H1 (cell line): ENCODE measurements at regions of chr1 and their contacts with region 1.

Region 1: DNA sequence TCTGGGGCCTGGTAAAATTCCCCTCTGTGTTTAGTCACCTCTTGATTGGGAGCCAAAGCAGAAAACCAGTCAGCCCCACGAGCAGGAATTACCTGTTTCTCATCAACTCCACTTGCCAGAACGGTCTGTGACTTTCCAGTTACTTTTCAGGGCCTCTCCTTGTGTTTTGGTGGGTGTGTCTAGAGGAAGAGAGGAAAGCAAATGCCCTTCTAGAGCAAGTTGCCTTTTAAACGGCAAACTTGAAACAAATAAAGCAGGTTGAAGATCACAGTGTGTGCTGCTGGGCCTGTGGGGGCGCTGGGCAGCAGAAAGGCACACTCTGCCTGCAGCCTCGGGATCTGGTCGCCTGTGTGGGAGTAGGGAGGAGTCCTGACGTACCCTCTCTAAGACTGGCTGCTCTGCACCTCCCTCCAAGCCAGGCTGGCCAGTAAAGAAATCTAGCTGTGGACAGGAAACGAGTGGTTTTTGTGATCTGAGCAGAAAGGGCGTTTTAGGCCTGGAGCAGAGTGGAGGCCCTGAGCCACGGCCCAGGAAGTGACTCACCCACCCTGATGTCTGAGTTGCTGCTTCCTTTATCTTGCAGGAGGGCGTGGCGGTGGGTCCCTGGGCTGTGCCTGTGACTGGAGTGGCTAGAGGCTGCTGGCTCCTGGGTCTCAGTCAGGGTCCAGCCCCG is 11.1 kb upstream of the S100A11 start:
- DNase-seq: peak; percentile 73 to 79
- H3K4me3 ChIP-seq: peak overlapping the region; percentile 3 to 44 (median 24); a peak in 5 of 8 replicates
- H3K27ac ChIP-seq: peak overlapping the region; percentile 67
- H3K4me1 ChIP-seq: peaks cover 14 to 19% (median 17%) of the 10 kb centered on the region in 4 experiments; a peak in 6 of 7 replicates
- H3K27me3 ChIP-seq: no peaks in the 10 kb centered on the region
- CTCF ChIP-seq: peak; percentile 52 to 80 (median 73); a peak in 3 of 4 replicates
- EP300 ChIP-seq: no peak
- POLR2A ChIP-seq: peak in 1 of 2 experiments; percentile 72; a peak in 2 of 3 replicates
- RAD21 ChIP-seq: peak in 1 of 2 experiments; percentile 17; a peak in 1 of 4 replicates

Region 2: GRCh38 chr1:151858030-151858691 is 189.7 kb before region 1 on chr1:
- CTCF ChIA-PET with region 1: no interaction called
- POLR2A ChIA-PET with region 1: no interaction called
- DNase-seq: peak in 1 of 2 experiments; percentile 19
- H3K4me3 ChIP-seq: no peak overlapping the region
- H3K27ac ChIP-seq: no peak overlapping the region
- H3K4me1 ChIP-seq: peaks cover 8 to 16% (median 12%) of the 10 kb centered on the region in 4 experiments
- H3K27me3 ChIP-seq: peaks cover 22 to 56% (median 48%) of the 10 kb centered on the region in 4 experiments
- CTCF ChIP-seq: no peak
- EP300 ChIP-seq: no peak
- POLR2A ChIP-seq: no peak
- RAD21 ChIP-seq: no peak

Region 3: DNA sequence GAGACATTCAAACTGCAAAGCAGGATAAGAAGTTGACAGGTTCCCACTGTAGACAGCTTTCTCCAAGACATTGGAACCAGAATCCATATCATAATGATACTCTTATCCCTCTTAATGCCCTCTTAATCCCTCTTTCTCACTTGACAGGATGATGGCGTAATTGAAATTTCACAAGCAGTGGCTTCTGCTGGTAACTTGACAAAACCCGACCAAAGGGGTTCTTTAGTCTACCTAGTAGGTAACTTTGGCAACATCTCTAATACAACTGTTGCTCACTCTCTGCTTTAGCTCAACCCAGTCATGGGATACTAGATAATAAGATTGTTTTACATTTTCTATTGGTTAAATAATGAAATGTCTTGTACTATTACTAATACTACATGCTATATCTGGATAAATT is 88.9 kb before region 1 on chr1:
- CTCF ChIA-PET with region 1: no interaction called
- POLR2A ChIA-PET with region 1: no interaction called
- DNase-seq: no peak
- H3K4me3 ChIP-seq: no peak overlapping the region
- H3K27ac ChIP-seq: no peak overlapping the region
- H3K4me1 ChIP-seq: no peaks in the 10 kb centered on the region
- H3K27me3 ChIP-seq: no peaks in the 10 kb centered on the region
- CTCF ChIP-seq: no peak
- EP300 ChIP-seq: no peak
- POLR2A ChIP-seq: no peak
- RAD21 ChIP-seq: no peak

Region 4: DNA sequence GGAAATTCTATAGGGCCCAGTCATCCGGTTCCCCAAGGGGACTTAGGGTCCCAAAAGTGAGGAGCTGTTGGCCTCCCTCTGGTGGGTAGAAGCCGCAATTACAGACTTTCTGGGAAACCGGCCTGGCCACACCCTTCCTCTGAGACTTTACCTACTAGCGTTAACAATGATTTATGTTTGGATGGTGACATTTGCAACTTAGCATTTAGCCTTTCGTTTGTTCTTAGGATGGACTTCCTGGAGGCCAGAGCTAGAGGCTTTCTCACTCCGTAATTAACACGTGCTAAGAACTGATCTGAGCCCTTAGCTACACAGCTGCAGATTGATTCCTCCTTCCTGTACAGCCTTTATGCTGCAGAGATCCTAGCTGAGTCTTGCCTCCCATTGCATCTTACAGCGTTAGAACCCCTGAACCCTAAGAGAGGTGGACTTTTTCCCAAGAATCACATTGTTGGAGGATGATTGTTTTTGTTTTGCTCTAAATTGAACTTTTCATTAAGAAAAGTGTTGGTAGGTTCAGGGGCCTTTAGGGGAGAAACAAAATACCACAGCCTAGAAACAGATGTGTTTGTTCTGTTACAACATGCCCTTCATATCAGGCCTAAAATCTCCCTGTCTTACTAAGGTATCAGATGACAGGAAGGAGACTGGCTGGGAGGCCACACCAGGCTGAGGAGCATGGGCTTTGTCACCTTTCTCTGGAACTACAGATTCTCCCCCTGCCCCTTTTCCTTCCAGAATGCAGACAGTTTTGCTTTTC is 13.0 kb before region 1 on chr1:
- CTCF ChIA-PET with region 1: interaction called, 12 read pairs
- POLR2A ChIA-PET with region 1: interaction called, 4 read pairs
- DNase-seq: peak in 1 of 2 experiments; percentile 87
- H3K4me3 ChIP-seq: peak overlapping the region in 2 of 4 experiments; percentile 74 to 76; a peak in 4 of 8 replicates
- H3K27ac ChIP-seq: no peak overlapping the region
- H3K4me1 ChIP-seq: peaks cover 4 to 12% (median 6%) of the 10 kb centered on the region in 4 experiments
- H3K27me3 ChIP-seq: no peaks in the 10 kb centered on the region; a peak in 2 of 7 replicates
- CTCF ChIP-seq: peak; percentile 56 to 79 (median 73)
- EP300 ChIP-seq: no peak
- POLR2A ChIP-seq: no peak
- RAD21 ChIP-seq: peak; percentile 42 to 56; a peak in 3 of 4 replicates

Region 5: DNA sequence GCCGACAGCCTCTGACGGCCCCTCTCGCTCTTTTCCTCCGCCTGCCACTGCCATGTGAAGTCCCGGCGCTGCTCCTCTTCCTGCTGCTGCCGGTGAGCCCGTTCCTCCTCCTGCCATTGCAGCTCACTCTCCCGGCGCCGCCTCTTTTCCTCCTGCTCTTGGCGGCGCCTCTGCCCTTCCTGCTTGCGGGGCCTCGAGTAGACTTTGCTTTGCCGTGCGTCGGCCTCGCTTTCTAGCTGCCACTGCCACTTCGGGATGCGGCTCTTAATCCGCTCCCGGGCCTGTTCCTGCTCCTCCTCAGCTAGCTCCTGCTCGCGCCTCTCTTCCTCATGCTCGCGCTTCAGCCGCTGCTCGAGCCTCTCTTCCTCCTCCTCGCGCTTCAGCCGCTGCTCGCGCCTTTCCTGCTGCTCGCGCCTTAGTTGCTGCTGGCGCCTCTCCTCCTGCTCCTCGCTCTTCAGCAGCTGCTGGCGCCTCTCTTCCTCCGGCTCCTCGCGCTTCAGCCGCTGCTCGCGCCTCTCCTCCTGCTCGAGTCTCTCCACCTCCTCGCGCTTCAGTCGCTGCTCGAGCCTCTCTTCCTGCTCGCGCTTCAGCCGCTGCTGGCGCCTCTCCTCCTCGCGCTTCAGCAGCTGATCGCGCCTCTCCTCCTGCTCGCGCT is 63.1 kb after region 1 on chr1:
- CTCF ChIA-PET with region 1: interaction called, 10 read pairs
- POLR2A ChIA-PET with region 1: no interaction called
- DNase-seq: peak in 1 of 2 experiments; percentile 67
- H3K4me3 ChIP-seq: peak overlapping the region; percentile 0 to 40 (median 18); a peak in 6 of 8 replicates
- H3K27ac ChIP-seq: no peak overlapping the region
- H3K4me1 ChIP-seq: peaks cover 0 to 11% (median 4%) of the 10 kb centered on the region in 4 experiments; a peak in 5 of 7 replicates
- H3K27me3 ChIP-seq: peaks cover 54 to 83% (median 79%) of the 10 kb centered on the region in 4 experiments
- CTCF ChIP-seq: no peak
- EP300 ChIP-seq: no peak
- POLR2A ChIP-seq: no peak
- RAD21 ChIP-seq: no peak

Region 6: DNA sequence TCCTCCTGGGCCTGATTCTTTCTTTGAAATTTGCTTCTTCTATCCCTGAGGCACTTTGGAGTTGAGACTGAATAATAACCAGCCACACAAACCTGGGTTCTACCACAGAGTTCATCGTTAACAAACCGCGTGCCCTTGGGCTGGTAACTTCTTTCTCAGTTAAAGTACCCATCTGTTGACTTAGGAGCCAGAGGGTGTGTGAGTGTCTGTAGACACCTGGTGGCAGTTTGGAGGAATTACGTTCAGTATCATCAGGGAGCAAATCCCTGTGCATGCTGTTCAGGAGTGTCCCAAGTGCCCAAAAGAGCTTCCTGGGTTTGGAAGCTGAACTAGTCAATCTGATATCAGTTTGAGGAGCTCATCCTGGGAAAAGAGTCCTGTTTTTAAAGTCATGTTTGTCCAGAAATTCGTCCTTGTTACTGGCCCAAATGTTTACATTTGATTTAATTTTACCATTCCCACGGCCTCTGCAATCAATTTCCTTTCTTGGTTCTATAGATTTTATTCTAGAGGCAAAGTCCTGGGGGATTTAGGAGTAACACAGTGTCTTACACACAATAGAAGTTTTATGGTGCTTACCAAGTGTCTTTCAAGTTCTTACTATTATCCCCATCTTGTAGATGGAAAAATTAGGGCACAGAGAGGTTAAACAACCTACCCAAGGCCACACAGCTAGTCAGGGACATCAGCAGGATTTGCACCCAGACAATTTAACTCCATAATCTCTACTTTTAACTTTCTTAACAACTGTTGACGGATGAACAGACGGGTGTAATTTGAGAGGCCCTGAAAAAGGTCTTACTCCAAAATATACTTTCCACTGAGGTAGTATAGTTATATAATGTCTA is 137.9 kb after region 1 on chr1:
- CTCF ChIA-PET with region 1: interaction called, 10 read pairs
- POLR2A ChIA-PET with region 1: no interaction called
- DNase-seq: peak in 1 of 2 experiments; percentile 42
- H3K4me3 ChIP-seq: no peak overlapping the region
- H3K27ac ChIP-seq: no peak overlapping the region
- H3K4me1 ChIP-seq: no peaks in the 10 kb centered on the region
- H3K27me3 ChIP-seq: 0 out of 7 replicates have a peak, but pooled peaks cover 0 to 2% (median 0%) of the 10 kb centered on the region in 4 experiments
- CTCF ChIP-seq: peak; percentile 46 to 77 (median 74)
- EP300 ChIP-seq: no peak
- POLR2A ChIP-seq: no peak
- RAD21 ChIP-seq: peak; percentile 75 to 83

Region 7: GRCh38 chr1:152440635-152441471 is 393.0 kb after region 1 on chr1:
- CTCF ChIA-PET with region 1: interaction called, 12 read pairs
- POLR2A ChIA-PET with region 1: no interaction called
- DNase-seq: peak in 1 of 2 experiments; percentile 58
- H3K4me3 ChIP-seq: no peak overlapping the region
- H3K27ac ChIP-seq: no peak overlapping the region
- H3K4me1 ChIP-seq: no peaks in the 10 kb centered on the region; a peak in 1 of 7 replicates
- H3K27me3 ChIP-seq: no peaks in the 10 kb centered on the region
- CTCF ChIP-seq: peak; percentile 60 to 67 (median 61)
- EP300 ChIP-seq: no peak
- POLR2A ChIP-seq: no peak
- RAD21 ChIP-seq: peak; percentile 64 to 75

Region 8: GRCh38 chr1:152459596-152460528 is 412.0 kb after region 1 on chr1:
- CTCF ChIA-PET with region 1: interaction called, 21 read pairs
- POLR2A ChIA-PET with region 1: no interaction called
- DNase-seq: peak in 1 of 2 experiments; percentile 62
- H3K4me3 ChIP-seq: no peak overlapping the region
- H3K27ac ChIP-seq: no peak overlapping the region
- H3K4me1 ChIP-seq: no peaks in the 10 kb centered on the region
- H3K27me3 ChIP-seq: no peaks in the 10 kb centered on the region
- CTCF ChIP-seq: peak; percentile 57 to 68 (median 63)
- EP300 ChIP-seq: no peak
- POLR2A ChIP-seq: no peak
- RAD21 ChIP-seq: peak; percentile 20 to 37; a peak in 2 of 4 replicates